ENCODE measurements at regions of chr17 and their contacts with region 1.

Region 1: DNA sequence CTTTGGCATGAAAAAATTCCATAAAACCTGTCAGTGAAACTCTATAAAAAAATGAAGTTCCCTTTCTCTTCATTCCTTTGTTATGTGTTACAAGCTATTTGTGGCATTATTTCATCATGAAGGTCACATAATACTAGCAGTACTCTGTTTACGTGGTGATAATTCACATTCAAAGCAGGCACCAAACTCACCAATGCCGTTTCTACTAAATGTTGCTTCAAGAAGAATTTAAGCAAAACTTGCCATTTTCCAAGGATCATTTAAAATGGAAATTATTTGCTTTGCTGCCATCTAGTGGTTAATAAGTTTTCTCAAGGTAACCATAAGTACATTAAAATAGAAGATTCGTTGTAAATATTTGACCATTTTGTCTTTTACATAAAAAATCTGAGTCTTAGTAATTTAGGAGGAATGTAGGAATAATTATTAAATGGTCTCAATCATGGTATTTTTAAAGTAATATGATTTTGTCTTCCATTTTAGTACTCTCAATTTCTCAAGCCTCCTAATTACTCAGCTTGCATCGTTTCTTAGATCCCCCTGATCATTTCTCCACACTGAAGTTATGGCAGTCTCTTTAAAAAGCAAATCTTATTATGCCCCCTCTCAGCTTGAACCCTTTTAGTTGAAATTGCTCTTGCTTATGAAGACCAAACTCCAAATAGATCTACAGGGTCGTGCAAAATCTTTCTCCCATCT is 80.8 kb downstream of the OMG start:
- DNase-seq: no peak
- H3K4me3 ChIP-seq: no peak overlapping the region
- H3K27ac ChIP-seq: peak overlapping the region in 1 of 2 donors; percentile 8
- H3K4me1 ChIP-seq: no peaks in the 10 kb centered on the region
- H3K27me3 ChIP-seq: no peaks in the 10 kb centered on the region
- CTCF ChIP-seq: peak; percentile 33 to 81 (median 60)
- POLR2A ChIP-seq: no peak

Region 2: GRCh38 chr17:31008374-31009041 is 207.7 kb before region 1 on chr17:
- intact Hi-C with region 1: loop called (anchors 10 kb)
- DNase-seq: peak; percentile 43
- H3K4me3 ChIP-seq: peak overlapping the region; percentile 71 to 78
- H3K27ac ChIP-seq: peak overlapping the region; percentile 86 to 89
- H3K4me1 ChIP-seq: peaks cover 7% of the 10 kb centered on the region
- H3K27me3 ChIP-seq: no peaks in the 10 kb centered on the region
- CTCF ChIP-seq: no peak
- POLR2A ChIP-seq: no peak